Panc1 (cell line): ENCODE measurements at regions of chr11 and their contacts with region 1.

Region 1: DNA sequence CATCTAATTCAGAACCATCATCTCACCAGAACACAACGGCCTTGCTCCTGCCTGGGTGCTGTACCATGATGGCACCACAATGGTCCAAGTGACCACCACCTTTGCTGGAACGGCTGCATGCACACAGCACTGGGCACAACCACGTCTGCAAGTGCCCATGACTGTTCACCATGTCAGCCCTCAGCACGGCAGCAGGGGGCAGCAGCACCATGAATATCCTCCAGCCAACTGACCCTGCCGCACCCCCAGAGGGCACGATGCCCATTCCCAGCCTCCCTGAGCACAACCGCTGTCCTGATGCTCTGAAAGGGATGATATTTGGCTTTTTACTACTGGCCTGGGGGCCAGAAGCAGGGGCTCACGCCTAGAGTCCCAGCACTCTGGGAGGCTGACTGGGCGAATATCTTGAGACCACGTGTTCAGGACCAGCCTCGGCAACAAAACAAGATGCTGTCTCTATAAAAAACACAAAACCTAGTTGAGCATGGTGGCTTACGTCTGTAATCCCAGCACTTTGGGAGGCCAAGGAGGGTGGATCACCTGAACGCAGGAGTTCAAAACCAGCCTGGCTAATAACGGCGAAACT is 25.7 kb downstream of the DRD4 start:
- DNase-seq: peak; percentile 33
- ATAC-seq: peak; percentile 93
- H3K4me3 ChIP-seq: no peak overlapping the region
- H3K27ac ChIP-seq: no peak overlapping the region
- H3K4me1 ChIP-seq: no peaks in the 10 kb centered on the region
- H3K27me3 ChIP-seq: no peaks in the 10 kb centered on the region
- CTCF ChIP-seq: no peak; the same call in 1 of the 2 replicates

Region 2: GRCh38 chr11:674406-674805 is 11.6 kb after region 1 on chr11:
- CTCF ChIA-PET with region 1: interaction called, 10 read pairs
- POLR2A ChIA-PET with region 1: no interaction called
- in situ Hi-C with region 1: no loop called
- intact Hi-C with region 1: no loop called
- DNase-seq: no peak
- ATAC-seq: no peak
- H3K4me3 ChIP-seq: no peak overlapping the region
- H3K27ac ChIP-seq: no peak overlapping the region
- H3K4me1 ChIP-seq: no peaks in the 10 kb centered on the region
- H3K27me3 ChIP-seq: no peaks in the 10 kb centered on the region
- CTCF ChIP-seq: no peak

Region 3: DNA sequence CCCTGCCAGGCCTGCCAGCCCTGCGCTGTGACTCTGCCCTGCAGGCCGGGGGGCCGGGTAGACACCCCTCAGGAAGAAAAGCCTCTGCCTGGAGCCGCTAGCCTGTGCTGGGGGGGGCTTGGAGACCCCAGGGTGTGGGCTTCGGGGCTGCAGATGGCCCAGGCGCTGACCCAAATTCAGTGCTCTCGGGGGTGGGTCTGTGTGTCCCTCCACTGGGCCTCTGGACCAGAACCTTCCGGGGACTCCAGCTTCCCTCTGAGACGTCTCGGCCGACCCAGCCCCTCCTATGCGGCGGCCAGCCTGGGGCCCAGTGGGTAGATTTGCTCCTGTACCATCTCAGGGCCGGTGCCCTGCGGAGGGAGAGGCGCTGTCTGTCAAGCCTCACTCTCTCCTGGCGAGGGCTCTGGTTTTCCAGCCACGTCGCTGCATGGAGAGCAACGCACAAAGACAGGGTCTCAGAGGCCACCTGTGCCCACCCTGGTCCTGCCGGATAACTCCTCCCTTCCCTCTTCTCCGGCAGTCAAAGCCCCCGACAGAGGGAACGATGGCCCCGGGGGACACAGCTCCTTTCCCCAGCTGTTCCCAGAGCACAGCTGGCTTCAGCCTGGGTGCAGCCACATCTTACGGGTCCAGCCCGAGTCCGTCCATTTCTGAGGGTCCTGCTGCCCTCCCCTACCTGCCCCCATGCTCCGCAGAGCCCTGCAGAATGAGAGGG is 686.7 kb after region 1 on chr11:
- CTCF ChIA-PET with region 1: no interaction called
- POLR2A ChIA-PET with region 1: interaction called, 14 read pairs
- in situ Hi-C with region 1: no loop called
- intact Hi-C with region 1: no loop called
- DNase-seq: no peak
- ATAC-seq: no peak
- H3K4me3 ChIP-seq: no peak overlapping the region
- H3K27ac ChIP-seq: no peak overlapping the region
- H3K4me1 ChIP-seq: peaks cover 41% of the 10 kb centered on the region
- H3K27me3 ChIP-seq: no peaks in the 10 kb centered on the region
- CTCF ChIP-seq: no peak